HCT116 (cell line): ENCODE measurements at regions of chr11 and their contacts with region 1.

Region 1: DNA sequence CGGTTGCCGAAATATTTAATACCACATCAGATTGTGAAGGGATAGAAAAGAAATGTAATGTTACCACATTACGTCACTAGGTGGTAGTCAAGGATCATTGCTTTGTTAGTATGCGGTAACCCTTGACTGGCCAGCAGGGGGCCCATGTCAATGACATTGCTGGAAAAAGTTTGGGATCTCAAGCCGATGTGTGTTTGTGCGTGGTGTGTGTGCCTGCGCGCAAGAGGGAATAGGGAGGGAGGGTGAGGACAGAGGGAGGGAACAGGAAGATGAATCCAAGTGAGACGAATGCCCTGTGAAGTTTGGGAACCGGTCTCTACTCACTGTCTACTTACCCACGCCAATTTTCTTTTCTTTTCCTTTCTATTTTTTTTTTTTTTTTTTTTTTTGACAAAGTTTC is 10.7 kb upstream of the MRGPRX2 start:
- DNase-seq: peak; percentile 77
- ATAC-seq: peak; percentile 98
- H3K4me3 ChIP-seq: 0 out of 4 replicates have a peak overlapping the region, but pooled peaks of 1 of the 2 experiments have one; percentile 15
- H3K27ac ChIP-seq: no peak overlapping the region
- H3K4me1 ChIP-seq: peaks cover 0 to 5% of the 10 kb centered on the region in 2 experiments; a peak in 2 of 4 replicates
- H3K27me3 ChIP-seq: no peaks in the 10 kb centered on the region
- CTCF ChIP-seq: peak; percentile 92 to 100 (median 99)
- POLR2A ChIP-seq: no peak
- RAD21 ChIP-seq: peak; percentile 99

Region 2: DNA sequence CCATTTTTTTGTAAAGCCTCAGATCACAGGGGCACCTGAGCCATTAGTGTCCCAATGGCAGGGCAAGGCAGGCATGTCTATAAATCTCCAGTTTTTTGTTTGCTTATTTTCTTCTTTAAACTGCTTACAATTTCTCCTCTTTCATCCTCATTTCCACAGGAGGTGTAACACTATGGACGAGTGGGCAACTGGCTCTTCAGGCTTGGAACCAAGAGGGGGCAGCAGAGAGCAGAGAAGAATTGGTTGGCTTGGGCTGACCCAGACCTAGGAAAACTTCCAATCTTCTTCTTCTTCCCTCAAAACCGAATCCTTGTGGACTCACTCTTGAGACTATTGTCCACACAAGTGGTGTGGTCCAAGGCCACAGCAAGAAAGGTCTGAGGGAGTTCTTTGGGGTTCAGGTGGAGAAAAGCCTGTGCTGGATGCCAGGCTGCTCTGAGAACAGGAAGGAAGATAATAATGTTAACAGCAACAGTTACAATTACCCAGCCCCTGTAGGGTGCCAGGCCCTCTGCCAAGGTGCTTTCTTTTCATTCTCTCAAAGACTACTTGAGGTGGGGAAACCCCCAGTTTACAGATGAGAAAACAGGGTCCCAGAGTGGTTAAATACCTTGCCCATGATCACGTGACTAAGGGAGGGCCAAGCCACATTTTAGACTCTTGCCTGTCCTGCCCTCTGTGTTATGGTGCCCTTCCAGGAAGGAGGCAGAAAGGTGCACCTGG is 240.2 kb after region 1 on chr11:
- CTCF ChIA-PET with region 1: no interaction called
- POLR2A ChIA-PET with region 1: no interaction called
- RAD21 ChIA-PET with region 1: no interaction called
- intact Hi-C with region 1: loop called (anchors 5 kb)
- DNase-seq: peak; percentile 31
- ATAC-seq: peak; percentile 97
- H3K4me3 ChIP-seq: no peak overlapping the region
- H3K27ac ChIP-seq: no peak overlapping the region
- H3K4me1 ChIP-seq: no peaks in the 10 kb centered on the region
- H3K27me3 ChIP-seq: peaks cover 17% of the 10 kb centered on the region
- CTCF ChIP-seq: peak; percentile 53 to 93 (median 85)
- POLR2A ChIP-seq: no peak
- RAD21 ChIP-seq: peak; percentile 58

Region 3: DNA sequence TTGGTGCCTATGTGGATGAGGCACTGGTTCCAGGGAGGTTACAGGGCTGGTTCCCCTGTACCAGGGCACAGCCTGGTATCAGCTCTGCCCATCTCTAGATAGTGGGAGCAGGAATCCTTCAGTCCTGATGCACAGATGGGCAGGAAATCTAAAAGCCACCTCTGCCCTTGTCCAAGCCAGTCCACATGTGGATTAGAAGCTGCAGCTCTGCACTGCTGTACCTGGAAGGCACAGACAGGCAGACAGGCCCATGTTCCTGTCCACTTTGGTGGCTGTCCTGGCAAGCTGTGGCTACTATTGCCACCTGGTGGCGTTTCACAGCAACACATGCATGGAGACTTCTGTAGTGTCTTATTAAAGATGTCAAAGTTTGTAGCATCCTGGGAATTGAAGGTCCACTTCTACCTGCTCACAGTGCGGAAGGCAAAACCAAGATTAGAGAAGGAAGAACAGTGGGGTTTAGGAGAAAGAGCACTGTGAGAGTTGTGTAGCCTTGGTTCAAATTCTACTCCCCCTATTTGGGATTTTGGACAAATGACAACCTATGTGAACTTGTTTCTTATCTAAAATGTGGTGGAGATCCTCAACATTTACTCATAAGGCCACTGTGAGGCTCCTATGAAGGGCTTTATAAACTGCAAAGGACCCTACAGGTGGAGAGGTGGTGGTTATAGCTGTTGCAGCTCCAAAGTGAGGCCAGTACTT is 671.5 kb after region 1 on chr11:
- CTCF ChIA-PET with region 1: no interaction called
- POLR2A ChIA-PET with region 1: no interaction called
- RAD21 ChIA-PET with region 1: no interaction called
- intact Hi-C with region 1: loop called (anchors 2 kb)
- DNase-seq: peak; percentile 51
- ATAC-seq: peak; percentile 97
- H3K4me3 ChIP-seq: no peak overlapping the region
- H3K27ac ChIP-seq: no peak overlapping the region
- H3K4me1 ChIP-seq: no peaks in the 10 kb centered on the region
- H3K27me3 ChIP-seq: no peaks in the 10 kb centered on the region
- CTCF ChIP-seq: peak; percentile 81 to 90 (median 88); a peak in 5 of 6 replicates
- POLR2A ChIP-seq: no peak
- RAD21 ChIP-seq: peak; percentile 96

Region 4: GRCh38 chr11:20110908-20111669 is 1039.8 kb after region 1 on chr11:
- CTCF ChIA-PET with region 1: interaction called, 3 read pairs
- POLR2A ChIA-PET with region 1: no interaction called
- RAD21 ChIA-PET with region 1: no interaction called
- intact Hi-C with region 1: loop called (anchors 10 kb)
- DNase-seq: peak; percentile 72
- ATAC-seq: peak; percentile 75
- H3K4me3 ChIP-seq: no peak overlapping the region
- H3K27ac ChIP-seq: no peak overlapping the region
- H3K4me1 ChIP-seq: peaks cover 14 to 27% of the 10 kb centered on the region in 2 experiments
- H3K27me3 ChIP-seq: no peaks in the 10 kb centered on the region
- CTCF ChIP-seq: peak; percentile 69 to 97 (median 87)
- POLR2A ChIP-seq: no peak
- RAD21 ChIP-seq: peak; percentile 81